H1 (cell line): ENCODE measurements at regions of chr6 and their contacts with region 1.

Region 1: DNA sequence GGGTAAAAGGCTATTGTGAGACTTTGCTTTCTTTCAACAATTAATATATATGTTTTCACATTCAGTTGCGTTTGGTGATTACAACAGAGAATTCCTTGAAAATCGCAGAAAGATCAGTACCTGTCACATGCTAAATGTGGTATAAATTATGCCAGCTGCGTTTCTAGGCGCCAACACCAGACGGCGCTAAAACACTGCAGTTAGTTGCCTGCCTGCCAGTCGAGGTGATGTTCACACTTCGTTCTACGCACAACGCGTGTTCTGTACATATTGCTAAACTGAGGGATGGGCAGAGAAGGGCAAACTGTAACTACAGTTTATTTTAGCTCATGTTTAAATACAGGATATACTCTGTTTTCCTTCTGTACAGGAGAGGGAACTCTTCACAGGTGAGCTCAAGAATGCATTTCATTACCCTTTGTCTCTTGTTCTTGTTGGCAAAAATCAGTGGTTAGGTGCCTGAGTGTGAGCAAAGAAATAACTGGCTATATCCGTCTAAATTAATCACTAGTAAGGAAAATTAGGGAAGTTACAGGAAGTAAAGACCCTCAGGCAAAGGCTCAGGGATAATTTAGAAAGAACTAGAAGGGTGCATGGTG is 100.1 kb upstream of the RGS17 start:
- DNase-seq: peak; percentile 58 to 87
- H3K4me3 ChIP-seq: no peak overlapping the region
- H3K27ac ChIP-seq: no peak overlapping the region
- H3K4me1 ChIP-seq: no peaks in the 10 kb centered on the region
- H3K27me3 ChIP-seq: no peaks in the 10 kb centered on the region
- CTCF ChIP-seq: peak; percentile 89 to 97 (median 95)
- EP300 ChIP-seq: no peak
- POLR2A ChIP-seq: no peak
- RAD21 ChIP-seq: peak; percentile 99 to 100

Region 2: DNA sequence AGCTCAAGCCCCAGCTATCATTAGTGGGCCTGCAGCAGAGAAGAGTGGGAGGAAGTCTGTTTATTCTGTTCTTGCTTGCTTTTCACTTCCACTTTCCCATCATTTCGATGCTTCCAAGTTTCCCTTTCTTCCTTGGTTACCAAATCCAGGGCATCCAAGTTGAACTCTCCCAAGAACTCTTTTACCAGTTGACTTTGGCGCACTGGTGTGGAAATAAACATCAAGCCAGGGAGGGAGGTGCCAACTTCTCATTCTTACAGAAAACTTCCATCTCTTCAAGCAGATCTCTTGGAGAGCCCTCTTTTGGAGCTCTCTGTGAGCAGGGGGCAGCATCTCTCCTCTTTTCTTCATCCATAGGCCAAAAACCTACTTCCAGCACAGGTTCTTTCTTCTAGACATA is 14.4 kb before region 1 on chr6:
- CTCF ChIA-PET with region 1: interaction called, 11 read pairs
- POLR2A ChIA-PET with region 1: no interaction called
- DNase-seq: no peak
- H3K4me3 ChIP-seq: no peak overlapping the region
- H3K27ac ChIP-seq: no peak overlapping the region
- H3K4me1 ChIP-seq: no peaks in the 10 kb centered on the region
- H3K27me3 ChIP-seq: no peaks in the 10 kb centered on the region
- CTCF ChIP-seq: no peak
- EP300 ChIP-seq: no peak
- POLR2A ChIP-seq: no peak
- RAD21 ChIP-seq: no peak

Region 3: GRCh38 chr6:153242767-153243166 is 11.6 kb after region 1 on chr6:
- CTCF ChIA-PET with region 1: interaction called, 13 read pairs
- POLR2A ChIA-PET with region 1: no interaction called
- DNase-seq: no peak
- H3K4me3 ChIP-seq: no peak overlapping the region
- H3K27ac ChIP-seq: no peak overlapping the region
- H3K4me1 ChIP-seq: no peaks in the 10 kb centered on the region
- H3K27me3 ChIP-seq: no peaks in the 10 kb centered on the region
- CTCF ChIP-seq: no peak
- EP300 ChIP-seq: no peak
- POLR2A ChIP-seq: no peak
- RAD21 ChIP-seq: no peak

Region 4: GRCh38 chr6:153312641-153313040 is 81.5 kb after region 1 on chr6:
- CTCF ChIA-PET with region 1: interaction called, 40 read pairs
- POLR2A ChIA-PET with region 1: no interaction called
- DNase-seq: peak in 1 of 2 experiments; percentile 48
- H3K4me3 ChIP-seq: no peak overlapping the region
- H3K27ac ChIP-seq: no peak overlapping the region
- H3K4me1 ChIP-seq: no peaks in the 10 kb centered on the region
- H3K27me3 ChIP-seq: no peaks in the 10 kb centered on the region
- CTCF ChIP-seq: peak; percentile 65 to 72 (median 70)
- EP300 ChIP-seq: no peak
- POLR2A ChIP-seq: no peak
- RAD21 ChIP-seq: peak; percentile 79 to 85

Region 5: DNA sequence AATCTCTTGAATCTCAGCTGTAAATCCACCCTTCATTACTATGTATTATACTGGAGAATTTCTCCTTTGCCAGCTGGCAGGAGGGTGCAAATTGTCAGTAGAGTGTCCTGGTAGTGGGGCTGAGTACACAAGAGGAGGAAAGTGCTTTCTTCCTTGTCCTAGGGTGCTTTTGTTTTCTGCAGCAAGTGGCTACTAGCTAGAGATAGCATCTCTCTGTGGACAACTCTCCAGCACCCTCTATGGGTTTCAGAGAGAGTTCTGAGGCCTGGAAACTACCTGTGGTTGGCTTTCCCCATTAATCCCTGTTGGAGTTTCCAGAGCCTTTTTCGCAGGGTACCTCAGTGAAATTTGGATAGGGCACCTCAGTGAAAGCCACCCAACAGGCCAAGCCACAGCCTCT is 322.5 kb after region 1 on chr6:
- CTCF ChIA-PET with region 1: interaction called, 33 read pairs
- POLR2A ChIA-PET with region 1: no interaction called
- DNase-seq: peak; percentile 31 to 51
- H3K4me3 ChIP-seq: no peak overlapping the region
- H3K27ac ChIP-seq: no peak overlapping the region
- H3K4me1 ChIP-seq: no peaks in the 10 kb centered on the region
- H3K27me3 ChIP-seq: no peaks in the 10 kb centered on the region
- CTCF ChIP-seq: peak in 2 of 3 experiments; percentile 78 to 81; a peak in 3 of 4 replicates
- EP300 ChIP-seq: no peak
- POLR2A ChIP-seq: no peak
- RAD21 ChIP-seq: peak; percentile 87 to 88